ENCODE measurements at regions of chr4 and their contacts with region 1.

Region 1: DNA sequence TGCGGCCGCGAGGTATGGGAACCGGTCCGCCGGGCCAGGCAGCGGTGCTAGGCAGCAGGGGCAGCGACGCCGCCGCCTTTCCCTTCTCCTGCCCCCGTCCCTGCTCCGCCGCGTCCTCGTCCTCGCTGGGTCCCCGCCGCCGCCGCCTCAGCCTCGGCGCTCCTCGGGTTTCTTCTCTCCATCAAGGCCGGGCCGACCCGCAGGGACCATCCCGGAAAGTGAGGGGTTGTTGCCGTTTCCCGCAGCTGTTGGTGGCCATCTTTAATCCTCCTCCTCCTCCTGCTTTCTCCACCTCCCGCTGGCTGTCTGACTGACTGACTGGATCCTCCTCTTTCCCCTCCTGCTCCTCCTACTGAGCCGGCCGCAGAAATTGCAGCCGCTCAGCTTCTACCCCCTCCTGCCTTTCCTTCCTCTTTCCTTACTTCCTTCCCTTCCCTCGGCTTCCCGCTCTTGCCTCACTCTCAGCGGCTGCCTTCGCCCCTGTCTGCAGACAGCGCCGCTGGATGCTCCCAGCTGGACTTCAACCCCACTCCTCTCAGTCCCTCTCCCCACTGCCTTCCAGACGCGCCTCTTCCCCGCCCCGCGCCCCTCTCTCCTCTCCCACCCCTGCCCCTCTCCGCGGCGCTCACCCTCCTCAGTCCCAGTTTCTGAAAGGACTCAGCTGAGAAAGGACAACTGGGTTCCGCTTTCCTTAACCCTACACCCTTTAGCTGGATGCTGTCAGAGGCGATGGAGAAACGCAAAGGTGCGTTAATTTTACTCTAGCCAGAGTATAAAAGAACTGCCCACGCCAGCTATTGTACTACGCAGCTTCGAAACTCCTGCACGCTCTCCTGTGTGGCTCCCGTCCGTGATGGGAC is at the start of gene WDFY3:
- DNase-seq: peak; percentile 35
- H3K4me3 Mint-ChIP-seq: peak within 1 kb of the TSS; percentile 85
- H3K27ac Mint-ChIP-seq: no peak within 1 kb of the TSS
- H3K4me1 Mint-ChIP-seq: peaks cover 14% of the 10 kb centered on the region
- H3K27me3 Mint-ChIP-seq: peaks cover 38% of the 10 kb centered on the region
- total RNA-seq, gene WDFY3: 1.0 to 1.2 TPM

Region 2: DNA sequence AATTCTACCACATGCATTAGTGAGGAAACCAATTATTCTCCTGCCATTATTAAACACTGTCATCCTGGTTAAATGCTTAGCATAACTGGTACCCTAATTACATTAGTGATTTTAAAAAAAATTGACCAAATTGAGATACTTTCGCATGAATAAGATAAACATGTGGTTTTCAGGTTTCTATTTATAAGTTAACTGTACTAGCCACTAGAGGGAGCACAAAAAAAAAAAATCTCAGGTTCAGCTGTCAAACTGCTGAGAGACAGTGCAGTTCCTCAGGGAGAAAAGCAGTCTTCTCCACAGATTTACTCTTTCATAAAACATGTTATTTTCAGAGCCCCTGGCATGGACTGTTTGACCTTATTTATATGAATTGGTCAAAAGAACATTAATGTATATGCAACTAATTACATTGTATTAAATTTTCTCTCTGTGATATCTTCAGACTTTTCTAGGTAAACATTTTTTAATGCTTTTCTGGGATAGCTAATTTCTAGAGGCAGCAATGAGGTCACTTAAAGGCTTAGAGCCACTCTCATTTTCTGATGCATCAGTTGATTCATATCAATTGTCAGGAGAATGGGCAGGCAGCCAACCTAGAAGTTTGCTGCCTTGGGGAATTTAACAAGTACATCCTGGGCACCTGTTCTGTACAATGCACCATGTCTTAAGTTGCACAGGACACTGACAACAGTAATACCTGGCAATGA is 216.2 kb before region 1 on chr4:
- CTCF ChIA-PET with region 1: interaction called, 18 read pairs
- intact Hi-C with region 1: loop called (anchors 1 kb)
- DNase-seq: no peak
- H3K4me3 Mint-ChIP-seq: no peak overlapping the region
- H3K27ac Mint-ChIP-seq: no peak overlapping the region
- H3K4me1 Mint-ChIP-seq: no peaks in the 10 kb centered on the region
- H3K27me3 Mint-ChIP-seq: peaks cover 2% of the 10 kb centered on the region

Measured in activated naive CD4-positive, alpha-beta T cell treated with anti-CD3 and anti-CD28 coated beads for 36 hours (primary cell).